ENCODE measurements at regions of chr6 and their contacts with region 1.

Region 1: DNA sequence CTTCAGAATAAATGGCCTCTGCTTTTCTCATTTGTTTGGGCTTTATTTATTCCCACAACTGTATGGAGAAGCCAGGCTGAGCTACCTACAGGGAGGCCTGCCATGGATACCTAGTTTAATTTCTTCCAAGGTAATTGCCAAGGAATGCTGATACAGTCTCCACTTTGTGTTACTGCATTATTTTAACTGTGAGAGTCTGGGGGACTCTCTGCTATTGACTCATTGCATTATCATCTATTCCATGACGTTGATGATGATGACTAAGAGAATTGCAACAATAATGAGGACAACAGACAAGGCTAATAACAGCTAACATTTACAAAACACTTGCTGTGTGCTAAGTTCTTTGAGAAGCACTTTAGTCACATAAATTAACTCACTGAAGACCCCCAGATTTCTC is 88.3 kb upstream of the COL21A1 start:
- DNase-seq: no peak
- CTCF ChIP-seq: no peak

Region 2: GRCh38 chr6:55209059-55209458 is 1126.7 kb before region 1 on chr6:
- in situ Hi-C with region 1: no loop called
- DNase-seq: no peak
- CTCF ChIP-seq: no peak

Region 3: DNA sequence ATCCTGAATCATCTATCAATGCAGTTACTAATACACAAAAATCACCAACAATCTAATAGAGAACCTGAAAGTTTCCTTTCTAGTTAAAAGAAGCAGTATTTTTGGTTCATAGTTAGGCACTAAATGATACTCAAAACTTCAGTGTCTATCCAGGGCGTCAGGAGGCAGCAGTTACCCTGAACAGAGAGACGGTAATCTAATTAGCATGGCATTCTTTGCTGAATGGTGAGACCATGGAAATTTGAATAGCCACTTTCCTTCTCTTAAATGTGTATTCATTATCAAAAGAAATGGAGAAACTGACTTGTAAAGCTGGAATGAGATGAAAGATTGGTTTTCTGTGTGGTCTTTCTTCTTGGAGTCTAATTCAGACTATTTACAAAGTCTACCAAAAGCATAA is 313.8 kb before region 1 on chr6:
- in situ Hi-C with region 1: no loop called
- DNase-seq: no peak
- CTCF ChIP-seq: no peak

Region 4: DNA sequence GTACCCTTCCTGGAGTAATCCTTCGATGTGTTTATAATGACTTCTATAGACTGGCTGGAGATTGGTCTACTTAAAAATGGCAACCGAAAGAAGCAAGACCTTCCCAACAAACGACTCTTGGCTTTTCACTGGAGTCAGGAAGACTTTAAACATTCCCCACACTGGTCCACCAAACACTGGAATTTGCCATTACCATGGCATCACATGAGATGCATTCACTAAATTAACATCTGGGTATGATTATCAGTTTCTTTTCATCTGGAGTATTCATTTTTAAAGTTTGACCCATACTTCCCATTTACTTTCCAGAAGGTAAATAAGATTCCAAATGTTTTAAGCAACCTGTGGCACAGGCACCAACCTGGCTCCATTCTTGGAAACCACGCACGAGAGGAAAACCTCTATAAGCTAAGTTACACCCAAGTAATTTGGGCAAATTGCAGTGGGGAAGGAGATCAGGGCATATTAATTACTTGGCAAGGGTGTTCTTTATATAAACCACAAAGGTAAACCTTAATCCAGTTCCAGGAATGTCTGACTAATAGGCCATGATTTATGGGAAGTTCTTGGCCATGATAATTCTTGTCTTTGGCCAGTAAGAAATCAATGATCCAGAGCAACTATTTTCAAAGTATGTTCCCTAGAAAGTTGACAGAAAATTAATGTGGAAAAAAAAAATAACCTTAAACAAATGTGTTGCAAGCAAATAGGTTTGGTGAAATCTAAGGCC is 101.6 kb after region 1 on chr6:
- in situ Hi-C with region 1: loop called (anchors 25 kb)
- DNase-seq: no peak
- CTCF ChIP-seq: no peak

Region 5: GRCh38 chr6:56491606-56492328 is 156.0 kb after region 1 on chr6:
- in situ Hi-C with region 1: no loop called
- DNase-seq: no peak
- CTCF ChIP-seq: no peak